Natural killer cell (primary cell): ENCODE measurements at regions of chr12 and their contacts with region 1.

Region 1: DNA sequence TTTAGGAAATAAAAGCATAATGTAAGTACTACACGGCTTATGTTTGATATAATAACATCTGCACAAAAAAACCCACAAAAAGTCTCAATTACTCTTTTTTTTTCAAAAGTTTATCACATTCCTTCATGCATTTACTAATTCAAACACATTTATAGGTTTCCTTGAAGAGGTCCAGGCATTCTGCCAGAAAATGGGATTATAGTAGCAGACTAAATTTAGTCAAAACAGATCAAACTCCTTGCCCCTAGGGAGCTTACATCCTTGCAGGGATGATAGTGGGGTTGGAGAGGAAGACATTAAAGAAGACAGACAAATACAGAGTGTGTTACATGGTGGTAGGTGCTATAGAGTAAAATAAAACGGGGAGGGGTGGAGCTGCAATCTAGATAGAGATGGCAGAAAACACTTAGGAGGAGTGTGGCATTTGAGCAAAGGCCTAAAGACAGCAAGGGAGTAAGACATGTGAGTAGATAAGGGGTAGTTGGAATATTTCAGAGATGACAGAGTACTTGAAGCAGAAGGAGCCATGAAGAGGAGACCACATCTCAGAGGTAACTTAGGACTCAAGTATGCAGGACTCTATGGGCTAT is 266.9 kb downstream of the PPFIA2 start:
- DNase-seq: no peak
- ATAC-seq: no peak
- H3K4me3 ChIP-seq: no peak overlapping the region
- H3K4me3 Mint-ChIP-seq: no peak overlapping the region
- H3K27ac ChIP-seq: no peak overlapping the region
- H3K27ac Mint-ChIP-seq: no peak overlapping the region
- H3K4me1 ChIP-seq: no peaks in the 10 kb centered on the region
- H3K4me1 Mint-ChIP-seq: no peaks in the 10 kb centered on the region
- H3K27me3 ChIP-seq: no peaks in the 10 kb centered on the region
- H3K27me3 Mint-ChIP-seq: no peaks in the 10 kb centered on the region
- CTCF ChIP-seq: no peak

Region 2: DNA sequence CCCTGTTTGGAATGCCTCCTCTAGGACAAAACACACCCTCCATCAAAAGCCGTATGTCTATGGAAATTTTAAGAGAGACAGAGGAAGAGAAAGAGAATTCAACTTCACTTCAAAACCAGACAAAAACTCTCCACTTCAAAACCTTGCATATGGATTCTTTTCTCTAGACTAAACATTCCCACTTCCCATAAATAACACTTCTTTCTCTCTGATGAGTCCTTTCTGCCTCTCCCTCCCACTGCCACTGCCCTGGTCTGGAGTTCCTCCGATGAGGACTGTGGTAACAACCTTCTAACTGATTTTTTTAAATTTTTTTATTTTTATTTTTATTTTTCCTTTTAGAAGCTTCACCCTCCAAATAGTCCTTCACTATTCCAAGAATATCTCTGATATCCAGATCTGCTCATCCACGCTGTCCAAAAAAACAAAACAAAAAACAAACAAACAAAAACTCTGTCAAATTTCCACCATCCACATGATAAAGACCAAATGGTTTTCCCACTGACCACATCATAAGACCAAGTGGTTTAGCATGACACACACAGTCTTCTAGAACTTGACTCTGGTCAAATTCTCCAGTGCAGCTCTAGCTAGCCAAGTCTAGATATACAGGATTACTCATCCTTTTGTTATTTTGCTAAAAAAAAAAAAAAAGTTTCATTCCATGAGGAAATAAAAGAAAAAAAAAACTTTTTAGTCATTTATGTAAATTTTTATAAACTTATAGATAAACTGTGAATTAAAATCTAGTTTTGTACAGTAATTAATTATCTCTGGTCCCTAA is 10.9 kb after region 1 on chr12:
- intact Hi-C with region 1: loop called (anchors 1 kb)
- DNase-seq: no peak
- ATAC-seq: no peak
- H3K4me3 ChIP-seq: no peak overlapping the region
- H3K4me3 Mint-ChIP-seq: no peak overlapping the region
- H3K27ac ChIP-seq: no peak overlapping the region
- H3K27ac Mint-ChIP-seq: no peak overlapping the region
- H3K4me1 ChIP-seq: no peaks in the 10 kb centered on the region
- H3K4me1 Mint-ChIP-seq: no peaks in the 10 kb centered on the region
- H3K27me3 ChIP-seq: no peaks in the 10 kb centered on the region
- H3K27me3 Mint-ChIP-seq: no peaks in the 10 kb centered on the region
- CTCF ChIP-seq: no peak